BJ (cell line): ENCODE measurements at regions of chr1 and their contacts with region 1.

Region 1: DNA sequence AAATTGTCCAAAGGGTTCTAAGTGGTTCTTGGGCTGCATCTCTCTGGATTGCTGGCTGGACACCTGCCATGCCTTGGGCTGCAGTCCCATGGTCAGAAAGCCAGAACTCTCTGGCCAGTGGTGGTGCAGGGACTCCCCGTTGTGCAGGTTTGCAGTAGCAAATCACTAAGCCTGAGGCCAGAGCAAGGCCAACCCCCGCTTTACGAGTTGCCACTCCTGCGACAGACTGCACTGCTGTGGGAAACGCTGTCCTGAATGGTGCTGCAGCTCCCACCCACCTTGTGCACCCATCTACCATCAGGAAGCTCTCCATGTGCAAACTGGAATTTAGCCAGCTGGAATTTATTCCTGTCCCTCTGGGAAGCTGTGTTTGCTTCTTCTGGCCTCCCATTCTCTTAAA is 45.7 kb downstream of the LHX4 start:
- DNase-seq: no peak
- H3K4me3 ChIP-seq: no peak overlapping the region
- H3K27me3 ChIP-seq: no peaks in the 10 kb centered on the region
- CTCF ChIP-seq: no peak

Region 2: GRCh38 chr1:180234369-180235076 is 41.2 kb before region 1 on chr1:
- CTCF ChIA-PET with region 1: no interaction called
- POLR2A ChIA-PET with region 1: no interaction called
- DNase-seq: no peak
- H3K4me3 ChIP-seq: no peak overlapping the region
- H3K27me3 ChIP-seq: peaks cover 58% of the 10 kb centered on the region
- CTCF ChIP-seq: no peak

Region 3: DNA sequence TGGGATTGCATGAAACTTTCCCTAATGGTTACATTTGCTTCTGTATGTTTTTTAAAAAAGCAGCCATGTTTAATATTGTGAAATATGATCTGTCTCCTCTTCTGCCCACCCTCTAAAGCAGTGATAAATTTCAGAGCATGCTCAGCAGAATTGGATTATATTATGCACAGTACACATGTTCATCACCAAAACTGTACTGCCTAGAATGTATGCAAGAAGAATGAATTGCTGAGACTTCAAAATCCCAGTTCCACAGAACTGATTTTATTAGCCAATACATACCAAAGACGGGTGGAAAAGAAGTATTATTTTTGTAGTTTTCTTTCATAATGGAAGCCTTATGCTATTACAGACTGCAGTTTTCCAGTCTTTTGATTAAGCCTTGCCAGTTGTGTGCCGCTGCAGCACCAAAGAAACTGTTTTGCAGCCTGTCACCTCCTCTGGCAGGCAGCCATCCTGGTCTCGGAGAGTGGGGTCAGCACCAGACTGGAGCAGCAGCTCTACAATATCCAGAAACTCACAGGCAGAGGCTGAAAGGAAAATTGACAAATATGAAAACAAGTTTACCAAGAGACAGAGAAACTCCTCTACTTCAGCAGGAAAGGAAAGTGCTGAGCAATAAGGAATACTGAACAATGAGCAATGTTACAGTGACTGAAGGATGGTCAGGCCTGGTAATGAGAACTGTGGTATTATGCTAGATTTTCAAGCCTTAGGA is 12.4 kb after region 1 on chr1:
- CTCF ChIA-PET with region 1: interaction called, 3 read pairs
- POLR2A ChIA-PET with region 1: interaction called, 13 read pairs
- DNase-seq: no peak
- H3K4me3 ChIP-seq: no peak overlapping the region
- H3K27me3 ChIP-seq: no peaks in the 10 kb centered on the region
- CTCF ChIP-seq: no peak